A673 (cell line): ENCODE measurements at regions of chr11 and their contacts with region 1.

Region 1: GRCh38 chr11:125123947-125124617 is 12.7 kb upstream of the TMEM218 start:
- DNase-seq: peak; percentile 89
- H3K4me3 ChIP-seq: no peak overlapping the region
- H3K27ac ChIP-seq: no peak overlapping the region
- H3K4me1 ChIP-seq: no peaks in the 10 kb centered on the region
- H3K27me3 ChIP-seq: no peaks in the 10 kb centered on the region
- CTCF ChIP-seq: peak; percentile 88

Region 2: GRCh38 chr11:124900464-124900863 is 223.6 kb before region 1 on chr11:
- CTCF ChIA-PET with region 1: no interaction called
- POLR2A ChIA-PET with region 1: no interaction called
- intact Hi-C with region 1: no loop called
- DNase-seq: peak; percentile 44
- H3K4me3 ChIP-seq: no peak overlapping the region
- H3K27ac ChIP-seq: no peak overlapping the region
- H3K4me1 ChIP-seq: no peaks in the 10 kb centered on the region
- H3K27me3 ChIP-seq: peaks cover 55% of the 10 kb centered on the region
- CTCF ChIP-seq: no peak

Region 3: GRCh38 chr11:125141686-125142535 is 17.8 kb after region 1 on chr11:
- CTCF ChIA-PET with region 1: interaction called, 11 read pairs
- POLR2A ChIA-PET with region 1: no interaction called
- intact Hi-C with region 1: no loop called
- DNase-seq: peak; percentile 77
- H3K4me3 ChIP-seq: no peak overlapping the region
- H3K27ac ChIP-seq: no peak overlapping the region
- H3K4me1 ChIP-seq: peaks cover 7% of the 10 kb centered on the region
- H3K27me3 ChIP-seq: no peaks in the 10 kb centered on the region
- CTCF ChIP-seq: peak; percentile 99

Region 4: GRCh38 chr11:125170510-125171031 is 46.5 kb after region 1 on chr11:
- CTCF ChIA-PET with region 1: no interaction called
- POLR2A ChIA-PET with region 1: no interaction called
- intact Hi-C with region 1: no loop called
- DNase-seq: no peak
- H3K4me3 ChIP-seq: no peak overlapping the region
- H3K27ac ChIP-seq: peak overlapping the region; percentile 22
- H3K4me1 ChIP-seq: peaks cover 6% of the 10 kb centered on the region
- H3K27me3 ChIP-seq: peaks cover 9% of the 10 kb centered on the region
- CTCF ChIP-seq: no peak

Region 5: DNA sequence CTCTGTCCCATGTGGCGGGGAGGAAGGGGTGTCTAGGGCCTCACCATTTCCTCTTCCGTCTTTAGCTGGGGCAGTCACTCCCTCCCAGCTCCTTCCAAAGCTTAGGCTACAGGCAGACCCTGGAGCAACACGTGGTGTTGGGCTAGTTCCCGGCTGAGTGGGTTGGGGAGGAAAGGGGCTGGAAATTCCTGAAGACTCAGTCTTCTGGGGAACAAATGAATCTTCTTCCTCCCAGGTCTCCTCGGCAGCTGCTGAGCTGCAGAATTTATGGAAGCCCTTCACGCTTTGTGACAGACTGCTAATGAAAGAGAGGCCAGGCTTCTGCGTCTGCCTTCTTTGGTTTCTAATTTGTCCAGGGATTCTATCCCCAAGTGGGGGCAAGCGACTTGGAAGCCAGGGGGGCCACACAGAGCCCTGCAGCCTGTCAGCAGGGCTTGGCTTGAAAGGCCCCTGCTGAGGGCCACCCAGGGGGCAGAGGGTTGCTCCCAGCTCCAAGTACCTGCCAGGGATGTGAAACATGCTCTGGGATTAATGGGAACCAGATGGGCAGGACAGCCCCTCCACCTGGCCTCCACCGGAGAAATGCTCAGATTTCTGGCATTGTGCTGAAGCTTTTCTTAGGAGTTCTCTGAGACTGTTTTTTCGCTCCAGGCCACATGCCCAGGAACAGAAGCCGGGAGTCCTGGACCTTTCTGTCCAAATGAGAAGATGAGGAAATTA is 163.6 kb after region 1 on chr11:
- CTCF ChIA-PET with region 1: no interaction called
- POLR2A ChIA-PET with region 1: no interaction called
- intact Hi-C with region 1: no loop called
- DNase-seq: no peak
- H3K4me3 ChIP-seq: no peak overlapping the region
- H3K27ac ChIP-seq: no peak overlapping the region
- H3K4me1 ChIP-seq: no peaks in the 10 kb centered on the region
- H3K27me3 ChIP-seq: peaks cover 8% of the 10 kb centered on the region
- CTCF ChIP-seq: no peak